ENCODE measurements at regions of chr19 and their contacts with region 1.

Region 1: GRCh38 chr19:18571564-18572300 is at the start of gene UBA52:
- DNase-seq: peak; percentile 97 to 99 (median 98)
- ATAC-seq: peak; percentile 90 to 99 (median 96)
- H3K4me3 ChIP-seq: peak within 1 kb of the TSS; percentile 71 to 100 (median 88)
- H3K27ac ChIP-seq: peak within 1 kb of the TSS; percentile 73 to 97 (median 90)
- H3K4me1 ChIP-seq: peaks cover 8 to 23% (median 17%) of the 10 kb centered on the region in 12 donors
- H3K27me3 ChIP-seq: no peaks in the 10 kb centered on the region
- CTCF ChIP-seq: no peak
- POLR2A ChIP-seq: peak; percentile 35 to 86
- total RNA-seq, gene UBA52: 336 to 944 (median 761) TPM

Region 2: DNA sequence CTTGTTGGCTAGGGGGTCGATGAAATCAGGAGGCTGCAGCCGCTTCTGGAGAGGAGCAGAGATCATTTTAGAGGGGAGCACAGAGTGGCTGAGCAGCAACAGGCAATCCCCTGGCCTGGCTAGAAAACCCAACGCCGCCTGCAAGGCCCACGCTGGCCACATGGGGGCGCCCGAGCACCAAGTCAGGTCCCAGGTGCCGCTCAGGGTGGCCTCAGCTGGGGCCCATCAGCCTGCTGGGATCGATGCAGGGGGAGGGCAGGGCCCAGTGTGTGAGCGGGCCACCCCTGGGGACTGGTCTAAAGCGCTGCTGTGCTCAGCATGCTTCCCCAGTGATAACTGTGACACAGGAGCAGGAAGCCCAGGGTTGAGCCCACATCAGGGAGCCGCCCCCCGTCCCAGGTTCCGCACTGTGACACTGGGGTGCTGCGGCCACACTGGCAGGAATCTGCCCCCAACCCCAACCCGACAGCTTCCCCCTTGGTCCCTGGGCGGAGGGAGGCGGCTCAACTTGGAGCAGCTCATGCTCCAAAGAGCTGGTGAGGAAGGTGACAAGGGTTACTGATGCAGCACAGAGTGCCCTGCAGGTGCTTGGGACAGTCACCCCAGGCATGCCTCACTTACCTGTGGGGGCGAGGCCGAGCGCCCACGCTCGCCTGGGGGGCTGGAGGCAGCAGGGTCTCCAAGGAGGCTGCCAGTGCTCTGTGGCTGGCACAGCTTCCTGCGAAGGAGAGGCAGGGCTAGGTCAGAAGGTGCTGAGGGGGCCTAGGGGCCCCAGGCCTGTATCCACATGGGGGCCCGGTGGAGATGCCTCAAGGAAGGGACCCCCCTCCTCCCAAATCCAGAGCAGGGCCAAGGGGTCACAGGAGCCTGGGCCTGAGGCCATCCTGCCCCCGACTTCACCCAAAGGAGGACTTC is 120.5 kb before region 1 on chr19:
- intact Hi-C with region 1: loop called in 2 of 10 experiments (anchors 5 kb)
- DNase-seq: peak; percentile 85 to 94 (median 88)
- ATAC-seq: peak; percentile 78 to 88 (median 86)
- H3K4me3 ChIP-seq: no peak overlapping the region
- H3K27ac ChIP-seq: peak overlapping the region in 1 of 12 donors; percentile 41
- H3K4me1 ChIP-seq: peaks cover 0 to 21% (median 8%) of the 10 kb centered on the region in 12 donors
- H3K27me3 ChIP-seq: no peaks in the 10 kb centered on the region
- CTCF ChIP-seq: peak; percentile 96 to 99 (median 98)
- POLR2A ChIP-seq: no peak